ENCODE measurements at regions of chr4 and their contacts with region 1.

Region 1: DNA sequence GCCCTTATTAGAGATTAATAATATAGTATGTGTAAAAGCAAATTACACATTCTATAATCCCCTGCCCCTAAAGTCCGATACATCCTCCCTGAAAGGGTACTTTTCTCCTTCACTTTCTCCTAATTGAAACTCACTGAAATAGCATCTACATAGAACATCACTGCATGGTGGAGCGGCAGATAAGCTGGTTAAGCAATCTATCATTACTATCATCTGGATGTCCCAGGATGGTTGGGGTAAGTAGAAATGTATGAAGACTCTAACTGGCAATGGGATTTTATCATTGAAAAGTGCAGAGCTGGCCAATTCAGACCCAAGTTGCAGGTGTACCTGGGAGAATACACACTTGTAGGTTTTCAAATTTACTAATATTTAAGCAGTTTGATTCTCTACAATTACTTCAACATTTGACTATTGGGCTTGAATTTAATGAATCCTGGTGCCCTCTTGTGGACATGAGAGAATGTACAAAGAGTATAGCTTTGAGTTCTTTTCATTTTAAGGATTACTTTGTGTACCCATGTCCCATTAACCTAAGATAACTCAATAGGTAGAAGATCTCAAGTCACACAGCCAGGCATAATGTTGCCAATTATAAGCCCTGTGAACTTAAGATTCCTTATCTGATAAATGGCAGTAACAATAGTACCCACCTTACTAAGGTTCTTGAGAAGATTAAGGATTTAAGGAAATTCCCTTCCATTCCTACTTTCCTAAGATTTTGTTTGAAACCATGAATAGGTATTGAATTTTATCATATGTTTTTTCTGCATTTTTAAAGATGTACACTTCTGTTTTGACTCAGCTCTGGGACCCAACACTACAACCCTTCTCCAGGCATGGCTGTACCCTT is 69.8 kb downstream of the SHROOM3 start:
- DNase-seq: peak; percentile 25 to 76
- H3K4me3 ChIP-seq: no peak overlapping the region
- H3K4me1 ChIP-seq: peaks cover under 1% of the 10 kb centered on the region; the same call in 1 of the 2 replicates
- H3K27me3 ChIP-seq: no peaks in the 10 kb centered on the region

Region 2: GRCh38 chr4:76179398-76180318 is 325.2 kb before region 1 on chr4:
- in situ Hi-C with region 1: loop called (anchors 10 kb)
- DNase-seq: peak; percentile 67 to 92
- H3K4me3 ChIP-seq: no peak overlapping the region
- H3K4me1 ChIP-seq: no peaks in the 10 kb centered on the region
- H3K27me3 ChIP-seq: no peaks in the 10 kb centered on the region

Region 3: DNA sequence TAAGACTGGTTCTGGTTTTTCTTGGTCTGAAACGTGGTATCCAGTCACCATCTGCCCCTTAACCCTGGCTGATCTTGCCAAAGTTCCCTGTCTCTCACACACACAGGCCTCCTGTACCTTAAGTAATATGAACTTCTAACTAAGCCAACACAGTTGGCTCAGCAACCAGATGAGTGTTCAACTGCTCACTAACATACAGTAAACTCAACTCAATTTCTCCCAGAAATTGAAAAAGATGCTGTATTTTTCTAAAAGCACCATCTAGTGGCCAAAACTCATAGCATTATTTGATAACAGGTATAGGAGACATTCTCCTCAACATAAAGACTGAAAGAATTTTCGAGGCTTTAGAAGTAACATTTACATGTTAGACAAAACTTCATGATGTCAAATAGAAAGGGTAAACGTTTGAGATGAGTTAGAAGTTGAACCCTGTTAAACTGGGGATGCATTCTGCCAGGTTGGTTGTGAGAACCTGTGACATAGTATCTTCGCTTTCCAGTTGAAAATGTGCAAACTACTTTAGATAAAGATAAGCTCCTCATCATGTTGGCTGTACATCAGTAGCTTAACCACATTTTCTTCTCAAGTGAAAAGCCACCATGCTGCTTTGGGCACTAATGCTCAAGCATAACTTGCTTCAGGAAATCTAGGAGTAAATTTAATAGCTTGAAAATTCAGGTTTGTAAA is 539.8 kb after region 1 on chr4:
- in situ Hi-C with region 1: loop called (anchors 25 kb)
- DNase-seq: peak in 1 of 2 experiments; percentile 39
- H3K4me3 ChIP-seq: no peak overlapping the region
- H3K4me1 ChIP-seq: no peaks in the 10 kb centered on the region; the same call in 1 of the 2 replicates
- H3K27me3 ChIP-seq: no peaks in the 10 kb centered on the region

Region 4: GRCh38 chr4:77308843-77309242 is 804.0 kb after region 1 on chr4:
- in situ Hi-C with region 1: loop called (anchors 25 kb)
- DNase-seq: peak; percentile 9 to 53
- H3K4me3 ChIP-seq: no peak overlapping the region
- H3K4me1 ChIP-seq: no peaks in the 10 kb centered on the region
- H3K27me3 ChIP-seq: no peaks in the 10 kb centered on the region

Measured in HAP-1 (cell line).